CD4-positive, alpha-beta memory T cell (primary cell): ENCODE measurements at regions of chr11 and their contacts with region 1.

Region 1: DNA sequence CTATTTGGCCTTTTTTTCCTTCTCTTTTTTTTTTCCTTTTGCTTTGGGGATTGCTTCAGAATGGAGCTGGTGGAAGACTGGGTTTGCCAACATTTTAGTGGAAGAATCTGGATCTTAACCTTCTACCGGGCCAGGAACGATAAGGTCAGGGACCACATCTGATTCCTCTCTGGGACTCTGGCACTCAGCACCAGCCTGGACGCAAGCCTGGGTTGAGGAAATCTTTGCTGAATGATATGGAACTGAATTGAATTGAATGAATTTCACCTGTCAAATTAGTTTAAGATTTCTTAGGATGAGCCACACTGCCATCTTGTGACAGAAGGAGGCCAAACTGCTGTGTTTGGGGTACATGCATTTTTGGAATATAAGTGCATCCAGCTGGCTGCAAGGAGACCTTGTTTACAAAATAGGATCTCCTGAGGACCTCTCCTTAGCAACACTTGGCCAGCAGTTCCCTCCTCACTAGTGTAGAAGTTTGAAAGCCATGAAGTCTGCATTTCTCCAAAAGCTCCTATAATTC is 30.4 kb downstream of the TPBGL start:
- DNase-seq: peak in 4 of 5 donors; percentile 22 to 32 (median 31)
- H3K4me3 ChIP-seq: no peak overlapping the region
- H3K4me3 Mint-ChIP-seq: no peak overlapping the region
- H3K27ac ChIP-seq: no peak overlapping the region
- H3K27ac Mint-ChIP-seq: peak overlapping the region in 6 of 7 donors; percentile 48 to 92 (median 70)
- H3K4me1 ChIP-seq: peaks cover 42% of the 10 kb centered on the region
- H3K4me1 Mint-ChIP-seq: peaks cover 22 to 50% (median 33%) of the 10 kb centered on the region in 4 donors
- H3K27me3 ChIP-seq: no peaks in the 10 kb centered on the region
- H3K27me3 Mint-ChIP-seq: no peaks in the 10 kb centered on the region

Region 2: DNA sequence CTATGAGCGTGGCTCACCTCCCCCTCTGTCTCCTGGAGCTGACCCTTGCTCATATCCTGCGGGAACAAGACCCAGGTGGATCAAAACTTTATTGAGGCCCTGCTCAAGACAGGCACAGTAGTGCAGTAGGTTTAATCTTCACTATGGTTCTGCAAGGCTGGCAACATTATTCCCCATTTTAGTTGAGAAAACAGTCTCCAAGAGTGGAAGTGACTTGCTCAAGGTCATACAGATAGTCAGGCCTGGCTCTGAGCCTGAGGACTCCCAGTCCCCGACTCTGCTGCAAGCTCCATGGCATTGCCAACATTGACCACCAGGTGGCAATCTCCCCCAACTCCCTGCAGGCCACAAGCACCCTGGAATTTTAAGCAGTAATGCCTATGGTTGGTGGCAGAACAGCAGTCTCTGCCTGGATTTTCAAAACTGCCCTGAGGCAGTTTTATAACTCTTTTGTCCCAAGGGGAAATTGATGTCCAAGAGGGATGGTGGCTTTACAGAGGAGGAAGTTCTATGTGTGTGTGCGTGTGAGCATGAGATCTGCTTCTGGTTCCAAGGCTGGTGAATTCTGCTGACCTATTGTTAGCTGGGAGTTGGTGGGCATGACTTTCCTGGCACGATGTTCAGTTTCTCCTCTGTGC is 248.1 kb before region 1 on chr11:
- CTCF ChIA-PET with region 1: interaction called, 30 read pairs
- POLR2A ChIA-PET with region 1: no interaction called
- intact Hi-C with region 1: loop called (anchors 1 kb)
- DNase-seq: peak; percentile 59 to 69 (median 62)
- H3K4me3 ChIP-seq: no peak overlapping the region
- H3K4me3 Mint-ChIP-seq: no peak overlapping the region
- H3K27ac ChIP-seq: no peak overlapping the region
- H3K27ac Mint-ChIP-seq: peak overlapping the region in 1 of 7 donors; percentile 10
- H3K4me1 ChIP-seq: no peaks in the 10 kb centered on the region
- H3K4me1 Mint-ChIP-seq: no peaks in the 10 kb centered on the region
- H3K27me3 ChIP-seq: no peaks in the 10 kb centered on the region
- H3K27me3 Mint-ChIP-seq: peaks cover 0 to 1% of the 10 kb centered on the region in 2 donors

Region 3: DNA sequence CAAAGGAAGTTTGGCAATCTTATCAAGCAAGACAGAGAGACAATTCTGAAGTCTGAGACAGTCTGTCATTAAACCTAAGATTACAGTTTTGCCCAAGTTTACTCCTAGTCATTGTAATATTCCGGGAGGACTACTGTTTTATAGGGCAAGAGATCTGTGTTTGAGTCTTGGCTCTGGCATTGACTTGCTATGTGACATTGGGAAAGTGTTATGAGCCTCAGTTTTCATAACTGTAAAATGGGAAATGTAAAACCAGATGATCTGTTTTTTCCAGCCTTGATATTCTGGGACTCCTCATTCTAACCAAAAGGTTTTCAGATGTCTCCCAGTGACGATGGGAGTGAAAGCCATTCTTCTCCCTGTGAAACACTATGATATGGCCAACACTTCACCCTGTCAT is 144.4 kb before region 1 on chr11:
- CTCF ChIA-PET with region 1: no interaction called
- POLR2A ChIA-PET with region 1: no interaction called
- intact Hi-C with region 1: no loop called
- DNase-seq: no peak
- H3K4me3 ChIP-seq: no peak overlapping the region
- H3K4me3 Mint-ChIP-seq: no peak overlapping the region
- H3K27ac ChIP-seq: no peak overlapping the region
- H3K27ac Mint-ChIP-seq: no peak overlapping the region
- H3K4me1 ChIP-seq: no peaks in the 10 kb centered on the region
- H3K4me1 Mint-ChIP-seq: no peaks in the 10 kb centered on the region
- H3K27me3 ChIP-seq: no peaks in the 10 kb centered on the region
- H3K27me3 Mint-ChIP-seq: peaks cover 19 to 27% of the 10 kb centered on the region in 2 donors

Region 4: DNA sequence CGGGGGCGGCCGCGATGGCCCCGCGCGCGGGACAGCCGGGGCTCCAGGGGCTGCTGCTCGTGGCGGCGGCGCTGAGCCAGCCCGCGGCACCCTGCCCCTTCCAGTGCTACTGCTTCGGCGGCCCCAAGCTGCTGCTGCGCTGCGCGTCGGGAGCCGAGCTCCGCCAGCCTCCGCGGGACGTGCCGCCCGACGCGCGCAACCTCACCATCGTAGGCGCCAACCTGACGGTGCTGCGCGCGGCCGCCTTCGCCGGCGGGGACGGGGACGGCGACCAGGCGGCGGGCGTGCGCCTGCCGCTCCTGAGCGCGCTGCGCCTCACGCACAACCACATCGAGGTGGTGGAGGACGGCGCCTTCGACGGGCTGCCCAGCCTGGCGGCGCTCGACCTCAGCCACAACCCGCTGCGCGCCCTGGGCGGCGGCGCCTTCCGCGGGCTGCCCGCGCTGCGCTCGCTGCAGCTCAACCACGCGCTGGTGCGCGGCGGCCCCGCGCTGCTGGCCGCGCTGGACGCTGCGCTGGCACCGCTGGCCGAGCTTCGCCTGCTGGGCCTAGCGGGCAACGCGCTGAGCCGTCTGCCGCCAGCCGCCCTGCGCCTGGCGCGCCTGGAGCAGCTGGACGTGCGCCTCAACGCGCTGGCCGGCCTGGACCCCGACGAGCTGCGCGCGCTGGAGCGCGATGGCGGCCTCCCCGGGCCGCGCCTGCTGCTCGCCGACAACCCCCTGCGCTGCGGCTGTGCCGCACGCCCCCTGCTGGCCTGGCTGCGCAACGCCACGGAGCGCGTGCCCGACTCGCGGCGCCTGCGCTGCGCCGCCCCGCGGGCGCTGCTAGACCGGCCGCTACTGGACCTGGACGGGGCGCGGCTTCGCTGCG is 29.7 kb before region 1 on chr11:
- CTCF ChIA-PET with region 1: interaction called, 270 read pairs
- POLR2A ChIA-PET with region 1: interaction called, 13 read pairs
- intact Hi-C with region 1: loop called (anchors 5 kb)
- DNase-seq: peak; percentile 76 to 90 (median 86)
- H3K4me3 ChIP-seq: peak overlapping the region in 1 of 2 donors; percentile 47
- H3K4me3 Mint-ChIP-seq: peak overlapping the region in 7 of 8 donors; percentile 67 to 82 (median 73)
- H3K27ac ChIP-seq: no peak overlapping the region
- H3K27ac Mint-ChIP-seq: peak overlapping the region in 1 of 7 donors; percentile 87
- H3K4me1 ChIP-seq: peaks cover 14% of the 10 kb centered on the region
- H3K4me1 Mint-ChIP-seq: peaks cover 1 to 16% (median 5%) of the 10 kb centered on the region in 4 donors
- H3K27me3 ChIP-seq: peaks cover 16% of the 10 kb centered on the region
- H3K27me3 Mint-ChIP-seq: peaks cover 24 to 27% of the 10 kb centered on the region in 2 donors

Region 5: GRCh38 chr11:75351791-75352587 is 81.0 kb after region 1 on chr11:
- CTCF ChIA-PET with region 1: interaction called, 8 read pairs
- POLR2A ChIA-PET with region 1: interaction called, 62 read pairs
- intact Hi-C with region 1: no loop called
- DNase-seq: peak; percentile 70 to 80 (median 74)
- H3K4me3 ChIP-seq: peak overlapping the region; percentile 77 to 83
- H3K4me3 Mint-ChIP-seq: peak overlapping the region; percentile 90 to 96 (median 94)
- H3K27ac ChIP-seq: peak overlapping the region; percentile 75
- H3K27ac Mint-ChIP-seq: peak overlapping the region; percentile 87 to 96 (median 93)
- H3K4me1 ChIP-seq: peaks cover 49% of the 10 kb centered on the region
- H3K4me1 Mint-ChIP-seq: peaks cover 40 to 73% (median 55%) of the 10 kb centered on the region in 4 donors
- H3K27me3 ChIP-seq: no peaks in the 10 kb centered on the region
- H3K27me3 Mint-ChIP-seq: no peaks in the 10 kb centered on the region

Region 6: DNA sequence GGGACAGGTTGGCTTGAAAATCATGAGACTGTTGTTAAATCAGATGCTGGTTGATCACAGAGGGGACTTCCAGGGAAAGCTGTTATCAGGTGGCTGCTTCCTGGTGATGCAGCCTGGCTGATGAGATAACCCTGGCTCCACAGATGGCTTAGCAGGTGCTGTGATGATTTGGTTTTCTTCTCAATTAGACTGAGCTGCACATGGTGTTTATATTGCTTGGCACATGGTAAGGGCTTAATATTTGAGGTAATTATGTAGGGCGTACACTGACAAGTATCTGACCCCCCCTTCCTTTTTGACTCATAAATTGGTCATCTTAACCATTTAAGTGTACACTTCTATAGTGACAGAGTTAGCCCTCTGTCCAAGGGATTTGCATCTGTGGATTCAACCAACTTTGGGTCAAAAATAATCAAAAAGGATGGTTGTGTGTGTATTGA is 135.4 kb after region 1 on chr11:
- CTCF ChIA-PET with region 1: interaction called, 19 read pairs
- POLR2A ChIA-PET with region 1: interaction called, 34 read pairs
- intact Hi-C with region 1: no loop called
- DNase-seq: no peak
- H3K4me3 ChIP-seq: no peak overlapping the region
- H3K4me3 Mint-ChIP-seq: no peak overlapping the region
- H3K27ac ChIP-seq: no peak overlapping the region
- H3K27ac Mint-ChIP-seq: peak overlapping the region in 2 of 7 donors; percentile 42 to 68
- H3K4me1 ChIP-seq: peaks cover 36% of the 10 kb centered on the region
- H3K4me1 Mint-ChIP-seq: peaks cover 30 to 53% (median 36%) of the 10 kb centered on the region in 4 donors
- H3K27me3 ChIP-seq: no peaks in the 10 kb centered on the region
- H3K27me3 Mint-ChIP-seq: no peaks in the 10 kb centered on the region

Region 7: GRCh38 chr11:75525596-75526541 is 254.9 kb after region 1 on chr11 and contains the start of gene GDPD5:
- CTCF ChIA-PET with region 1: no interaction called
- POLR2A ChIA-PET with region 1: interaction called, 14 read pairs
- intact Hi-C with region 1: no loop called
- DNase-seq: peak; percentile 89 to 94 (median 92)
- H3K4me3 ChIP-seq: peak within 1 kb of the TSS; percentile 65 to 67
- H3K4me3 Mint-ChIP-seq: peak within 1 kb of the TSS; percentile 89 to 98 (median 92)
- H3K27ac ChIP-seq: peak within 1 kb of the TSS; percentile 62
- H3K27ac Mint-ChIP-seq: peak within 1 kb of the TSS; percentile 82 to 96 (median 91)
- H3K4me1 ChIP-seq: peaks cover 44% of the 10 kb centered on the region
- H3K4me1 Mint-ChIP-seq: peaks cover 33 to 72% (median 48%) of the 10 kb centered on the region in 4 donors
- H3K27me3 ChIP-seq: no peaks in the 10 kb centered on the region
- H3K27me3 Mint-ChIP-seq: no peaks in the 10 kb centered on the region
- total RNA-seq, gene GDPD5: 141 to 160 TPM